ENCODE measurements at regions of chr3 and their contacts with region 1.

Region 1: GRCh38 chr3:115819785-115820384 is 196.6 kb downstream of the GAP43 start:
- DNase-seq: peak; percentile 85
- H3K4me3 Mint-ChIP-seq: no peak overlapping the region
- H3K27ac Mint-ChIP-seq: no peak overlapping the region
- H3K4me1 Mint-ChIP-seq: peaks cover 2% of the 10 kb centered on the region
- H3K27me3 Mint-ChIP-seq: no peaks in the 10 kb centered on the region
- CTCF ChIP-seq: peak; percentile 96

Region 2: DNA sequence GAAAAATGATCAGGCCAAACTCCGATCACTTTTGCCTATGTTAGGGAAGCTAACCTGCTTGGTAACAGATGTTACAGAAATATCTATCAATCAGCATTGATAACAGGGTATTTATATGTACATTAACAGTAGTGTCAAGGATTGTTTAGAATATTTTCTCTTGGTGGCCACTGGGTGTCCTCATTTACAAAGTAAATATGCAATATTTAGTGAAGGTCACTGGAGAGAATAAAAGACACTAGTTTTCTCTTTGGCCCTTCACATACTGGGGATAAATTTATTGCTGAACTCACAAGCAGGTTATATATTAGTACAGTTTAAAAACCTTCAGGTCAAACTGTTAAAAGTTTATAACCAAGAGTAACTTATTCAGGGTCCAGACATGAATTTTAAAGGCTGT is 1457.1 kb before region 1 on chr3:
- CTCF ChIA-PET with region 1: interaction called, 3 read pairs
- POLR2A ChIA-PET with region 1: no interaction called
- intact Hi-C with region 1: loop called (anchors 5 kb)
- DNase-seq: peak; percentile 33
- H3K4me3 Mint-ChIP-seq: no peak overlapping the region
- H3K27ac Mint-ChIP-seq: no peak overlapping the region
- H3K4me1 Mint-ChIP-seq: peaks cover 7% of the 10 kb centered on the region
- H3K27me3 Mint-ChIP-seq: no peaks in the 10 kb centered on the region
- CTCF ChIP-seq: peak; percentile 48

Region 3: GRCh38 chr3:114827495-114827894 is 992.4 kb before region 1 on chr3:
- CTCF ChIA-PET with region 1: interaction called, 4 read pairs
- POLR2A ChIA-PET with region 1: no interaction called
- intact Hi-C with region 1: loop called (anchors 5 kb)
- DNase-seq: peak; percentile 50
- H3K4me3 Mint-ChIP-seq: no peak overlapping the region
- H3K27ac Mint-ChIP-seq: no peak overlapping the region
- H3K4me1 Mint-ChIP-seq: no peaks in the 10 kb centered on the region
- H3K27me3 Mint-ChIP-seq: no peaks in the 10 kb centered on the region
- CTCF ChIP-seq: peak; percentile 64

Region 4: DNA sequence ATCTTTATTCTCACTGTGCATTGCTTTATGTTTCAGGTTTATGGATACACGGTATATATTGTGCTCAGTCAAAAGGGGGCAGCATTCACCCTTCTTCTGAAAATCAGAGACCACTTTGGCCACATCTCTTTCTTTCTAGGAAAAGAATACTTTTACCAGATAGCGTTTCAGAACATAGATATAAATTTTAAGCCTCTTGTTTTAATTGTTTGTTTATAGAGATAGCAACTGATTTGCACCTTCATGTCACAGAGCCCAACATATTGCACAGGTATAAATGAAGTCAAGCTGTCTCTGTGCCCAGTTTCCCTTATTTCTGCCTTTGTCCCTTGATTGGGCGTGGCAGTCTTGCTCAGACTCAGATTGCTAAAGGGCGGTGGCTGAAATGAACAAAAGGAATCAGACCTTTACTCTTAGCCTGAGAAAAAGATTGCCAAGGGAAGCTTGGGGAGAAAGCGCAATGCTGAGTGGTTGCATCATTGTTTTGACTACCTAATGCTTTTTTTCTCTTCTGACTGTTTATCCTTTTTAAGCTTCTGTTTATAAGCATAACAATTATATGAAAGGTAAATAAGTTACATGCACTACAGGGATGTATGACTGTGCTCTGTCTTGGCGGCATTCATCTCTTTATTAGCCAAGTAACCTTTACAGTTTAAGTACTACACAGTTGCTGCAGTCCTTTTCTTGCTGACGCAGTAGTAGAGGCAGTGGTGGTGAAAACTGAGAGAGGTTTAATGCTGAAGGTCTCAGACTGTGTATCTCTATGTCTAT is 602.0 kb before region 1 on chr3:
- CTCF ChIA-PET with region 1: interaction called, 21 read pairs
- POLR2A ChIA-PET with region 1: no interaction called
- intact Hi-C with region 1: loop called (anchors 1 kb)
- DNase-seq: peak; percentile 71
- H3K4me3 Mint-ChIP-seq: no peak overlapping the region
- H3K27ac Mint-ChIP-seq: peak overlapping the region; percentile 9
- H3K4me1 Mint-ChIP-seq: peaks cover 8% of the 10 kb centered on the region
- H3K27me3 Mint-ChIP-seq: no peaks in the 10 kb centered on the region
- CTCF ChIP-seq: peak; percentile 81

Region 5: DNA sequence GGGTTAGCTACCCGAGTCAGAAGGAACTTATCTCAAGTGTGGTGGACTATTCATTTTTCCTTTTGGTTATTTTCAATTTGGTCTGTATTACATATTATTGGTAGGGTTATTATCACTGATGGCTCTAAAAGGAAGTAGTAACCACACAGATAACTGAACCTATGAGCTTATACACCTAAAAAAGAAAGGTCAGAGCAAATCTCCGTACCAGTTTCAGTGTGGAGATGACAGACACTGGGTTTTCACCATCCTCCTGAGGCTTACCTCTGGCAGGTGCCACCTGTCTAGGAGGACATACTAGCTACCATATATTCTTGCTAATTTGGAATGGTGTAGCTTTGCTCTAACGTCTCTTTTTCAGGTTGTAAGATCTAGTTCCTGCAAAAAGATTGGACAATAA is 186.4 kb before region 1 on chr3:
- CTCF ChIA-PET with region 1: no interaction called
- POLR2A ChIA-PET with region 1: no interaction called
- intact Hi-C with region 1: no loop called
- DNase-seq: no peak
- H3K4me3 Mint-ChIP-seq: no peak overlapping the region
- H3K27ac Mint-ChIP-seq: no peak overlapping the region
- H3K4me1 Mint-ChIP-seq: no peaks in the 10 kb centered on the region
- H3K27me3 Mint-ChIP-seq: no peaks in the 10 kb centered on the region
- CTCF ChIP-seq: no peak

Region 6: GRCh38 chr3:115783938-115784738 is 35.7 kb before region 1 on chr3:
- CTCF ChIA-PET with region 1: interaction called, 14 read pairs
- POLR2A ChIA-PET with region 1: interaction called, 3 read pairs
- intact Hi-C with region 1: no loop called
- DNase-seq: peak; percentile 86
- H3K4me3 Mint-ChIP-seq: peak overlapping the region; percentile 81
- H3K27ac Mint-ChIP-seq: peak overlapping the region; percentile 90
- H3K4me1 Mint-ChIP-seq: peaks cover 25% of the 10 kb centered on the region
- H3K27me3 Mint-ChIP-seq: no peaks in the 10 kb centered on the region
- CTCF ChIP-seq: peak; percentile 94

Region 7: GRCh38 chr3:115836944-115837343 is 17.1 kb after region 1 on chr3:
- CTCF ChIA-PET with region 1: interaction called, 31 read pairs
- POLR2A ChIA-PET with region 1: interaction called, 3 read pairs
- intact Hi-C with region 1: no loop called
- DNase-seq: peak; percentile 27
- H3K4me3 Mint-ChIP-seq: no peak overlapping the region
- H3K27ac Mint-ChIP-seq: no peak overlapping the region
- H3K4me1 Mint-ChIP-seq: peaks cover 6% of the 10 kb centered on the region
- H3K27me3 Mint-ChIP-seq: no peaks in the 10 kb centered on the region
- CTCF ChIP-seq: peak; percentile 60

Region 8: DNA sequence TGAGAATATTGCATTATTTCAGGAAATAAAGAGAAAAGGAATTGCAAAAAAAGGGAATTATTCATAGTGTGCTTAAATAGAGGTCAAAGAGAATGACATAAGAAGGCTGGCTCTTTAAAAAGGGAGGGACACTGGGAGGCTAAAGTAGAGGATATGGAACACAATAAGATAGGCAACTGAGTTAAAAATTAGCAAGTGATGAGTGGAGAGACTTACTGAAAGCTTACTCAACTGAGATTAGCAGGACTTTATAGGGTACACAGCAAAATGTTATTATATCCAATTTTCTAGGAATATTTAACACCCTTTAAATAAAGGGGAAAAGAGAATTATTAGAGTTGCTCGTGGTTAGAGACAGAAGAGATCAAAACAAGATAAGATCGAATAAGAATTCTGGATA is 250.2 kb after region 1 on chr3:
- CTCF ChIA-PET with region 1: no interaction called
- POLR2A ChIA-PET with region 1: no interaction called
- intact Hi-C with region 1: no loop called
- DNase-seq: no peak
- H3K4me3 Mint-ChIP-seq: no peak overlapping the region
- H3K27ac Mint-ChIP-seq: no peak overlapping the region
- H3K4me1 Mint-ChIP-seq: no peaks in the 10 kb centered on the region
- H3K27me3 Mint-ChIP-seq: no peaks in the 10 kb centered on the region
- CTCF ChIP-seq: no peak

Region 9: DNA sequence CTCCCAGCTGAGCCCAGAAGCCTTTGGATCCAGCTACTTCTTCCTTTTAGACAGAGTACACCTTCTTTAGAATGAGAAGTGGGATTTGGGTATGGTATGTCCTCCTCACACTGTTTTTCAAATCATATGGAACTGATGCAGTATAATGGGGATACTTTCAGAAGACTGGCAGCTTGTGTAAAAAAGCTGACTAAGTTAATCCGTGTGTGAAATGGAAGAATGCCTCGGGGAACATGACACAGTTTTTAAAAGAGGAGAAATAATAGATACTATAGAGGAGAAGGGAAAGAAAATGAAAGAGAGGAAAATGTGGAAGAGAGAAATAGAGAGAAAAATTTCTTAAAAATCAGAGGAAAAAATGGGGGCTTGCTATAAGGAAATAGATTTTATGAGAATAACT is 937.4 kb after region 1 on chr3:
- CTCF ChIA-PET with region 1: interaction called, 3 read pairs
- POLR2A ChIA-PET with region 1: no interaction called
- intact Hi-C with region 1: loop called (anchors 5 kb)
- DNase-seq: no peak
- H3K4me3 Mint-ChIP-seq: no peak overlapping the region
- H3K27ac Mint-ChIP-seq: no peak overlapping the region
- H3K4me1 Mint-ChIP-seq: no peaks in the 10 kb centered on the region
- H3K27me3 Mint-ChIP-seq: peaks cover 84% of the 10 kb centered on the region
- CTCF ChIP-seq: no peak

Measured in MCF 10A (cell line).